MCF 10A (cell line): ENCODE measurements at regions of chr2 and their contacts with region 1.

Region 1: GRCh38 chr2:222860740-222861410 is at the start of gene ACSL3:
- DNase-seq: peak; percentile 96
- H3K4me3 Mint-ChIP-seq: no peak within 1 kb of the TSS
- H3K27ac Mint-ChIP-seq: peak within 1 kb of the TSS; percentile 66
- H3K4me1 Mint-ChIP-seq: peaks cover 14% of the 10 kb centered on the region
- H3K27me3 Mint-ChIP-seq: no peaks in the 10 kb centered on the region
- CTCF ChIP-seq: peak; percentile 4
- total RNA-seq, gene ACSL3: 183 and 203 TPM in 2 replicates

Region 2: DNA sequence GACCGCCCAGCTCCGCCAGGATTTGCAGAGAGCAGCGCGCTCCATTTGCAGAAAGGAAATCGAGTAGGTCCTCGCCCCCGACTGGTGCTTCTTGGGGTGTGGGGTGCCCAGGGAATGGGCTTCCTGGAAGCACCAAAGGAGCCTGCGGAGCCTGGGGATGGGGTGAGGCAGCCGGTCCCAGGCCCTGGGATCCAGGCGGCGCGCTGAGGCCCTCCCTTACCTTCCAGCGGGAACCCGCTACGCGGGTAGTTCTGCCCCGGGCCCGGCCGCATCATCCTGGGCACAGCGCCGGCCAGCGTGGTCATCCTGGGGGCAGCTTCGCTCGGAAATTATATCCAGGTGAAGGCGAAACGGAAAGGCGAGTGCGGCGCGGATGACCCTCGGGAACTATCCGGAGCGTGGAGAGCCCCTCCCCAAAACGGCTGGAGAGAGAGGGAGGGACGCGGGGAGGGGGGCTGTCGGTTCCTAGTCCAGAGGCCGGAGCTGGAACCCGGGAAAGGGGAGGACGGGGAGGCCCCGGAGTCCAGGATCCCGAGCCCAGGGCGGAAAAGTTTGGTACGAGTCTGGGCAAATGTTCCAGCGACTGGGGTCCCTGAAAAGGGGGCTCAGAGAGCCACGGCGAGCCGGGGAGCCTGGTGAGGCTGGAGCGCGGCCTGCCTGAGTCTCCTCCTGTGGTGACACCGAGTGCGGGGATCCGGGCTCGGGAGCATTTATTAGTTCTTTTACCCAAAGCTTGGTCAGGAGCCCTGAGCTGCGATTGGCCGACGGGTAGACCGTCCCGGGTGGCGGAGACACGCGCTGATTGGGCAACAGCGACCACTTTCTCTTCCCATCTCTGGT is 562.3 kb before region 1 on chr2 and contains the start of gene PAX3:
- CTCF ChIA-PET with region 1: no interaction called
- POLR2A ChIA-PET with region 1: no interaction called
- intact Hi-C with region 1: no loop called
- DNase-seq: no peak
- H3K4me3 Mint-ChIP-seq: no peak within 1 kb of the TSS
- H3K27ac Mint-ChIP-seq: no peak within 1 kb of the TSS
- H3K4me1 Mint-ChIP-seq: peaks cover 7% of the 10 kb centered on the region
- H3K27me3 Mint-ChIP-seq: peaks cover 100% of the 10 kb centered on the region
- CTCF ChIP-seq: no peak
- total RNA-seq, gene PAX3: not detected in 2 replicates

Region 3: DNA sequence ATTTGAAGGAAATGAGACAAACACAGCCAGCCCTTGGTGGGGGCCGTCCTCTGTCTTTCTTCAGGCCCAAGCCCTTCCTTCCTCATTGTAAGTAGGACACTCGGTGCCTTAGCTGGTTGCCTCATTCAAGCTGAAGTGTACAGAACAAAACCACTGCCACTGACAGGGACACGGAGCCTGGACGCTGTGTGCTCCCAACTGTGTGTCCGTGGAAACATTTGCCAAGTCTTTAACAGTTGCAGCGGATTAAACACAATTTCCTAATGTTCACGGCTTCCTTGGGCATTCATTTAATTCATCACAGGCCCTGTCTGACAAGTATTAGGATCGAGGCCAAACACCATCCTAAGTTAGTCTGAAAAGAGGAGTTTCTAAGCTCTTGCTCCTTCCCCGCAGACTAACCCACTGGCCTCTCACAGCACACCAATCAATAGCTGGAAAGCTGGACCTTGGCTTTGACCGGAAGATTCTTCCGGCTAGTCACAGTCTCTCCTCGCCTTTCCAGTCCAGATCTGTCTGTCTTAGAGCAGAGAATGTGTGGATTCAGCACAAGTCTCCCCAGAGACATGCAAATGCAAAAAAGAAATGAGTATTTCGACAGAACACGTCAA is 68.8 kb before region 1 on chr2:
- CTCF ChIA-PET with region 1: interaction called, 41 read pairs
- POLR2A ChIA-PET with region 1: interaction called, 28 read pairs
- intact Hi-C with region 1: loop called (anchors 1 kb)
- DNase-seq: no peak
- H3K4me3 Mint-ChIP-seq: no peak overlapping the region
- H3K27ac Mint-ChIP-seq: no peak overlapping the region
- H3K4me1 Mint-ChIP-seq: peaks cover 25% of the 10 kb centered on the region
- H3K27me3 Mint-ChIP-seq: no peaks in the 10 kb centered on the region
- CTCF ChIP-seq: no peak

Region 4: GRCh38 chr2:222813177-222813843 is 47.6 kb before region 1 on chr2:
- CTCF ChIA-PET with region 1: interaction called, 8 read pairs
- POLR2A ChIA-PET with region 1: interaction called, 98 read pairs
- intact Hi-C with region 1: no loop called
- DNase-seq: peak; percentile 71
- H3K4me3 Mint-ChIP-seq: no peak overlapping the region
- H3K27ac Mint-ChIP-seq: peak overlapping the region; percentile 70
- H3K4me1 Mint-ChIP-seq: peaks cover 31% of the 10 kb centered on the region
- H3K27me3 Mint-ChIP-seq: no peaks in the 10 kb centered on the region
- CTCF ChIP-seq: no peak

Region 5: DNA sequence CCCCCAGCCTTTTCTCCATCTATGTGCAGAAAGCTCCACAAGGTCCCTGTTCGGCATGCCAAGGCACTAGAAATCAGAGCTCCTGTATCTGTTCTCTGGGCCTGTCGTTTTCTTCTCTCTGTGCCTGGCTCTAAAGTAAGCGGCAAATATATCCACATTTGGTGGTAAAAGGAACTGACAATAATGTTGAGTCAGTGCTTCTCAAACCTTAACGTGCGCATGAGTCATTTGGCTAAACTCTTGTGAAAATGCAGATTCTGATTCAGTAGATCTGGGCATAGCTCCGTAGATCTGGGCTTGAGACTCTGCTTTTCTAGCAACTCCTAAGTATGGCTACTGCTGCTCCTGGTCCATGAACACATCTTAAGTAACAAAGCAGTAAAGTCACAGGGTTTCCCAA is 16.6 kb before region 1 on chr2:
- CTCF ChIA-PET with region 1: interaction called, 14 read pairs
- POLR2A ChIA-PET with region 1: interaction called, 205 read pairs
- intact Hi-C with region 1: loop called (anchors 1 kb)
- DNase-seq: peak; percentile 93
- H3K4me3 Mint-ChIP-seq: peak overlapping the region; percentile 52
- H3K27ac Mint-ChIP-seq: peak overlapping the region; percentile 87
- H3K4me1 Mint-ChIP-seq: peaks cover 39% of the 10 kb centered on the region
- H3K27me3 Mint-ChIP-seq: no peaks in the 10 kb centered on the region
- CTCF ChIP-seq: no peak

Region 6: DNA sequence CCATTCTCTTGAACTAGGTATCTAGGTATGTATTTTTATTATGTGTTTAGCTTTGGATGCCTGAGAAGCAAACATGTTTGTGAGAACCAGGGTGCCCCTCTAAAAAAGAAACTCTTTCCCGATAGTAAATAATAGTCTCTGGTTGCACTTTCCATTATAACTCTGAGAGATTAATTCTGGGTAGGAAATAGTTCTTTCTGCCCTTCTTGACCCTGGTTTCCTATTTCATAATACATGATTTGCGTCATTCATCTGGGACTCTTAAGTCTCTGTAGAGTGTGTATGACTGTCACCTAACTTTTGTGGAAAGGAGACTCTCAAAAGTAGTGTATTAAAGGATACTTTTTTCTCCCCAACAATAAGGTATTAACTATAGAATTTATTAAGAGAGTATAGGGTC is 31.4 kb after region 1 on chr2:
- CTCF ChIA-PET with region 1: interaction called, 4 read pairs
- POLR2A ChIA-PET with region 1: interaction called, 240 read pairs
- intact Hi-C with region 1: no loop called
- DNase-seq: peak; percentile 67
- H3K4me3 Mint-ChIP-seq: peak overlapping the region; percentile 53
- H3K27ac Mint-ChIP-seq: peak overlapping the region; percentile 89
- H3K4me1 Mint-ChIP-seq: peaks cover 33% of the 10 kb centered on the region
- H3K27me3 Mint-ChIP-seq: no peaks in the 10 kb centered on the region
- CTCF ChIP-seq: no peak

Region 7: DNA sequence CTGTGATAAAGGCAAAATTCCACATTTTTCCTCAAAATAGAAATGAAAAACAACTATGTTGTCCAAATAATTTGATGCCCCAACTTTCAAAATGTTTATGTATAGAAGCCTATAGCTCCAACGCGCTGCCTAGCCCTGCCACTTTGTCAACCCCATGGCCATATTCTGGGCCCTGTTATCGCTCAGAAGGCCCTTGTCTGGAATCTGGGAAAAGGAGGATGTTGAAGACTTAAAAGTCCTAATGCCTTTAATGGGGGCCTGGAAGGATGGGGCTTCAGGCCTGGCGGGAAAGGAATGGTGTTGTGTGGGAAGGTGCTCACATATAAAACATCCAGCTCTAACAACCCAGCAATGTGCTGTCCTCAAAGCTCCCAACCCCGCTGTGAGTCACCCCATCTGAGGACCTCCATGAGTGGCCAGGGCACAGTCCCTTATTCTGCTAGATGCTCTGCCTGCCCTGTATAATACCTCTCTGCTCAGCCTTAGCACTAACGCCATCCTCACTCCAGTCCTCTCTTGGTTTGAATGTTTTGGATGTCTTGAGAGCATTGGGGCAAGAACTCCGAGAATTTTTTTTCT is 85.9 kb after region 1 on chr2:
- CTCF ChIA-PET with region 1: no interaction called
- POLR2A ChIA-PET with region 1: no interaction called
- intact Hi-C with region 1: no loop called
- DNase-seq: no peak
- H3K4me3 Mint-ChIP-seq: no peak overlapping the region
- H3K27ac Mint-ChIP-seq: no peak overlapping the region
- H3K4me1 Mint-ChIP-seq: peaks cover 7% of the 10 kb centered on the region
- H3K27me3 Mint-ChIP-seq: no peaks in the 10 kb centered on the region
- CTCF ChIP-seq: no peak